MCF 10A (cell line): ENCODE measurements at regions of chr6 and their contacts with region 1.

Region 1: DNA sequence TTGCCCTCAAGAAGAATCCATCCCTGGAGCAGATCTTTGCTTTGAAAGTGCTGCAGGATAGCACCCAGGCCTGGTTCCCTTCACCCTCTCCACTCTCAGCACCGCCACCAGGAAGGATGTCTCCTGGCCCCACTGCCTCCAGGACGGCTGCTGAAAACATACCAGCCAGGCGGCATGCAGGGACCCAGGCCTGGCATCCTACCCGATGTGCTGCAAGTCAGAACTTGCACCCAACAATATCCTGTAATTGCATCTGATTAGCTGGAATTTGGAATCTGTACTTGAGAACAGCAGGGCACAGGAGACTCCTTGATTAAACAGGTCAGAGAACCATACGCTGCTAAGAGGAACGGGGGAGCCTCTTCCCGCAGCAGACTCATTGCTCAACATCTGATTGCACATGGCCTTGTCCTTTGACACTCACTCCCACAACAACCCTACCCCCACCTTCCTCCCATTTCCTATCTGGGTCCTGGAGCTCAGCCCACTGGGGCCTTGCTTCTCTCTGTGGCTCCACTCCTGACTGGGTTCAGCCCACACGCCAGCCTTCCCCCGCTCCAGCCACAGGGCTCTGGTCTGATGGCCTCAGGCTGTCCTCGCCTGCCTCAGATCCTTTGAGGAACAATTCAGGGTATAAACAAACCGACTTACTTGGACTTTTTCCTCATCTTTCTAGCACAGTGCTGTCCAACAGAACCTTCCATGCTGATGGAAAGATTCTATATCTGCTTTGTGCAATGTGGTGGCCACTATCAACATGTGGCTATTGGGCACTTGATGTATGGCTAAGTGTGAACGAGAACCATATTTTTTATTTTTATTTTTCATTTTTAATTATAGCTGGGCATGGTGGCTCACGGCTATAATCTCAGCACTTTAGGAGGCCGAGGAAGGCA is 78.0 kb downstream of the FGD2 start:
- DNase-seq: peak; percentile 84
- H3K4me3 Mint-ChIP-seq: no peak overlapping the region
- H3K27ac Mint-ChIP-seq: no peak overlapping the region
- H3K4me1 Mint-ChIP-seq: peaks cover 16% of the 10 kb centered on the region
- H3K27me3 Mint-ChIP-seq: no peaks in the 10 kb centered on the region
- CTCF ChIP-seq: no peak

Region 2: DNA sequence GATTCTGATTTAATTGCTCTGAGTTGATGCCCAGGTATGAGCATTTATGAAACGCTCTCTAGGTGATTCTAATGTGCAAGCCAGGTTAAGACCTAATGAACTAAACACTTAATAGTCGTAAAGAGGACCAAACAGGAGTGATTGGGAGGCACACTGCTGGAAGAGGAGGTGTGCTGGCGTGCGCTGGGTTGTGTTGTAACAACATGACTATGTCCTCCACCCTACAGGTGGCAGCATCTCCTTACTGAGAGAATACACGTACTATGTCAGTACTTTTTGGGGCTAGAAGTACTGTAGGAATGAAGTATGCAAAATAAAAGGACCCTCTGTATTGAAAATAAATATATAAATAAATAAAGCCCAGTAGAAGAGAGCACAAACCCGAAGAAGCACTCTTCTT is 185.9 kb before region 1 on chr6:
- CTCF ChIA-PET with region 1: no interaction called
- POLR2A ChIA-PET with region 1: no interaction called
- intact Hi-C with region 1: no loop called
- DNase-seq: peak; percentile 25
- H3K4me3 Mint-ChIP-seq: no peak overlapping the region
- H3K27ac Mint-ChIP-seq: no peak overlapping the region
- H3K4me1 Mint-ChIP-seq: peaks cover 8% of the 10 kb centered on the region
- H3K27me3 Mint-ChIP-seq: no peaks in the 10 kb centered on the region
- CTCF ChIP-seq: no peak

Region 3: GRCh38 chr6:37072526-37072925 is 11.0 kb before region 1 on chr6:
- CTCF ChIA-PET with region 1: interaction called, 6 read pairs
- POLR2A ChIA-PET with region 1: interaction called, 10 read pairs
- intact Hi-C with region 1: no loop called
- DNase-seq: no peak
- H3K4me3 Mint-ChIP-seq: no peak overlapping the region
- H3K27ac Mint-ChIP-seq: no peak overlapping the region
- H3K4me1 Mint-ChIP-seq: peaks cover 27% of the 10 kb centered on the region
- H3K27me3 Mint-ChIP-seq: no peaks in the 10 kb centered on the region
- CTCF ChIP-seq: no peak

Region 4: DNA sequence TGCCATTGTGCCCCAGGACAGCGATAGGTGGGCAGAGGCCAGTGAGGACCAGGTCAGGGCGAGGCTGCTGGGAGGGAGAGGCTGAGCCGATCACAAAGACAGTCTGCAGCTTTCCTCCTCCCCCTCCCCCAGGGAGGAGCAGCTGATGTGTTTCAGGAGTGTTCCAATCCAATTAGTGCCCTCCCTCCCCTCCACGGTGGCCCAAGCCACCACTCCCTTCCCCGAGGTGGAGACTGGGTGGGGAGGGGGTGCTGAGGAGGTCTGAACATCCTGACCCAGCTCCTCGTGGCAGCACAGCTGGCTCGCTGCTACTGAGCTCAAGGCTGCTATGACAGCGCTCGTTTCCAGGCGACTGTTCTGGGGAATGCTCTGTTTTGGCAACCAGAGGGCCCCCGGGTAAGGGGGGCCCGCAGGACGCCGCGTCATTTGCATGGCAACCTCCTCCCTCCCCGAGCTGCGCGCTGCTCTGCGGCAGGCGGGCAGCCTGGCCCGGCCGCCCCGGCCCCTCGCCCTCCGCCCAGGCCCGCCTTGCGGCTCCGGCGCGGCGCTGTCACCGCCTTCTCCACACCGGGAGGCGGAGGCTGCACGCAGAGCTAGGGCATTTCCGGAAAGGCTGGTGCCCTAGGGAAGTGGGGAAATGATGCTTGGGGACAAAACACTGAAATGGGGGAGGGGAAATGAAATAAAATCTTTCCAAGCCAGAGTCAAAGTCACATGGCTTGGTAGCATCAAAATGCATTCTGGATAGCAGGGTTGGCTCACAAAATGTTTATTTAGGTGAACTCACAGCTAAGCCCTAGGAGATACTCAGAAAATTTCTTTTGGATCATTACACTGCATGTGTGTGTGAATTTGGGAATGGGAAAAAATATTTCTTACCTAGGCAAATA is 19.0 kb after region 1 on chr6:
- CTCF ChIA-PET with region 1: no interaction called
- POLR2A ChIA-PET with region 1: interaction called, 10 read pairs
- intact Hi-C with region 1: no loop called
- DNase-seq: peak; percentile 72
- H3K4me3 Mint-ChIP-seq: peak overlapping the region; percentile 67
- H3K27ac Mint-ChIP-seq: peak overlapping the region; percentile 93
- H3K4me1 Mint-ChIP-seq: peaks cover 13% of the 10 kb centered on the region
- H3K27me3 Mint-ChIP-seq: no peaks in the 10 kb centered on the region
- CTCF ChIP-seq: no peak

Region 5: GRCh38 chr6:37137201-37138090 is 54.0 kb after region 1 on chr6:
- CTCF ChIA-PET with region 1: interaction called, 3 read pairs
- POLR2A ChIA-PET with region 1: interaction called, 17 read pairs
- intact Hi-C with region 1: no loop called
- DNase-seq: peak; percentile 90
- H3K4me3 Mint-ChIP-seq: no peak overlapping the region
- H3K27ac Mint-ChIP-seq: peak overlapping the region; percentile 62
- H3K4me1 Mint-ChIP-seq: peaks cover 34% of the 10 kb centered on the region
- H3K27me3 Mint-ChIP-seq: no peaks in the 10 kb centered on the region
- CTCF ChIP-seq: no peak